A673 (cell line): ENCODE measurements at regions of chr5 and their contacts with region 1.

Region 1: DNA sequence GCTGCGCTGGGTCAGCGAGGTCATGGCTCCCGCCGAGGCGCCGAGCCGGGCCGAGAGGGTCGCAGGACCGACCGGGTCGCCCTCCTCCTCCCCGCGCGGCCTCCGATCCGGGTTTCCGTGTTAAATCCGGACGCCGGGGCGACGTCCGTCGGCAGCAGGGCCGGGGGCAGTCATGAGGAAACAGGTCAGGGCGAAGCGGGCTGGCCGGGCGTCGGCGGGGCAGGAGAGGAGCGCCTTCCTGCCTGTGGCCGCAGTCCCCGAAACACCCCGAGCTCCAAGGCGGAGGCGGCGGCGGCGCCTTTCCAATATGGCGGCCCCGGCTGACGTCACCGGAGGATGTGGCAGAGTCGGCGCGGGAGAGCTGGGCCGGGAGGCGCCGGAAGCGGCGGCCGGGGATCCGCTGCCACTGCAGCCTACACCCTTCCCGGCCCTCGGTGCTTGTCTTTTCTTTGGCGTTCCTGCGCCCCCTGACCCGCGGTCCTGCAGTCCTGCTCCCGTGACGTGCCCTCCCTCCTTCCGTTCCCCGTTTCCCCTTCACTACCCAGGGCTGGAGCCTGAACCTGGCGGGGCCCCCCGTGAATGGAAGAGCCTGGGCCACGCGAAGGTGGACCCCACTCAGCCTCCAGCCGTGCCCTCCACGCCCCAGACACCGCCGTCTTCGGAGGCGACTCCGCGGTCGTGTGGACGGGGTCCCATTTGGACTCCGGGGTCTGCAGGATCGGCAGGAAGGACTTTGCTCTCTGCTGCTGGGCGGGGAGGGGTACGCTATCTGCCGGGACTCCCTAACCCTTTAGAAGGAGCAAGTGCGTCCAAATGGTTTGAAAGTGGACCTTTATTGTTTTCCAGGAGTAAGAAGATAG is at the start of gene GOLPH3:
- DNase-seq: peak; percentile 95
- H3K4me3 ChIP-seq: peak within 1 kb of the TSS; percentile 99
- H3K27ac ChIP-seq: peak within 1 kb of the TSS; percentile 100
- H3K4me1 ChIP-seq: peaks cover 17% of the 10 kb centered on the region
- H3K27me3 ChIP-seq: no peaks in the 10 kb centered on the region
- CTCF ChIP-seq: no peak
- total RNA-seq, gene GOLPH3: 64.6 and 65.0 TPM in 2 replicates

Region 2: GRCh38 chr5:32047056-32047455 is 127.2 kb before region 1 on chr5:
- CTCF ChIA-PET with region 1: no interaction called
- POLR2A ChIA-PET with region 1: no interaction called
- intact Hi-C with region 1: no loop called
- DNase-seq: no peak
- H3K4me3 ChIP-seq: no peak overlapping the region
- H3K27ac ChIP-seq: no peak overlapping the region
- H3K4me1 ChIP-seq: peaks cover 15% of the 10 kb centered on the region
- H3K27me3 ChIP-seq: no peaks in the 10 kb centered on the region
- CTCF ChIP-seq: no peak

Region 3: DNA sequence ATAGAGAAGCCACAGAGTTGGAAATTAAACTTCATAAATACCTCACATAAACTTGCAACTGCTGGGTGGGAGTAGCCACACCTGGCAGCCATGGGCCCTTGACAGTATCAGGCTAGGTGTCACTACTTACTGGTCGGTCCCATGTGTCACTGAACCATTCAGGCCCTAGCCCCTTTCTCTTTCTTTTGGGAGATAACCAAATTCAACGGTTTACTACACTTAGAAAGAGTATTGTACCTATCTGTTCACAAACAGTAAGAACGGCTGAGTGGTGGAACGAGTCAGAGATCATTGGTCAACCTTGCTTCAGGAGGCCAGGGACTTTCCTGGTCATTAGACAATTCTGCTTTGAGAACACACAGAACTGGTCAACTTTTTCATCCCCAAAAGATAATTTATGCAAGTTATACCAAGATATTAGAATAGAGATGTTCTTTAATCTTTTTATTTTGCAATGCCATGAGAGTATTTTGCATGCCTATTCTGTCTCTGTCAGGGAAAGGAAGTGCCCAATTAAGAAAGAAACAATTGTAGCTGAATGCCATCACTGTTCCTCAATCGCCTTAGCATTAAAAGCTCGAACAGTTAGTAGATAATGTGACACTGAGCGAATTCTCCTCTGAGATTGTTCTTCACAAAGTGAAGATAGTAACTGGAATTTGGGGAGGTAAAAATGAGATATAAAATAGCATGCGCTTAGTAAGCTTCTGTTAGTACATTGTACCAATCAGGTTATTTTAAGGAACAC is 51.0 kb before region 1 on chr5:
- CTCF ChIA-PET with region 1: interaction called, 3 read pairs
- POLR2A ChIA-PET with region 1: no interaction called
- intact Hi-C with region 1: loop called (anchors 5 kb)
- DNase-seq: peak; percentile 74
- H3K4me3 ChIP-seq: no peak overlapping the region
- H3K27ac ChIP-seq: peak overlapping the region; percentile 44
- H3K4me1 ChIP-seq: peaks cover 34% of the 10 kb centered on the region
- H3K27me3 ChIP-seq: no peaks in the 10 kb centered on the region
- CTCF ChIP-seq: no peak